ENCODE measurements at regions of chr1 and their contacts with region 1.

Region 1: GRCh38 chr1:117284399-117285215 is 73.9 kb upstream of the VTCN1 start:
- DNase-seq: peak; percentile 75

Region 2: GRCh38 chr1:117067533-117068370 is 216.9 kb before region 1 on chr1:
- CTCF ChIA-PET with region 1: interaction called, 21 read pairs
- POLR2A ChIA-PET with region 1: no interaction called
- DNase-seq: peak; percentile 66

Region 3: DNA sequence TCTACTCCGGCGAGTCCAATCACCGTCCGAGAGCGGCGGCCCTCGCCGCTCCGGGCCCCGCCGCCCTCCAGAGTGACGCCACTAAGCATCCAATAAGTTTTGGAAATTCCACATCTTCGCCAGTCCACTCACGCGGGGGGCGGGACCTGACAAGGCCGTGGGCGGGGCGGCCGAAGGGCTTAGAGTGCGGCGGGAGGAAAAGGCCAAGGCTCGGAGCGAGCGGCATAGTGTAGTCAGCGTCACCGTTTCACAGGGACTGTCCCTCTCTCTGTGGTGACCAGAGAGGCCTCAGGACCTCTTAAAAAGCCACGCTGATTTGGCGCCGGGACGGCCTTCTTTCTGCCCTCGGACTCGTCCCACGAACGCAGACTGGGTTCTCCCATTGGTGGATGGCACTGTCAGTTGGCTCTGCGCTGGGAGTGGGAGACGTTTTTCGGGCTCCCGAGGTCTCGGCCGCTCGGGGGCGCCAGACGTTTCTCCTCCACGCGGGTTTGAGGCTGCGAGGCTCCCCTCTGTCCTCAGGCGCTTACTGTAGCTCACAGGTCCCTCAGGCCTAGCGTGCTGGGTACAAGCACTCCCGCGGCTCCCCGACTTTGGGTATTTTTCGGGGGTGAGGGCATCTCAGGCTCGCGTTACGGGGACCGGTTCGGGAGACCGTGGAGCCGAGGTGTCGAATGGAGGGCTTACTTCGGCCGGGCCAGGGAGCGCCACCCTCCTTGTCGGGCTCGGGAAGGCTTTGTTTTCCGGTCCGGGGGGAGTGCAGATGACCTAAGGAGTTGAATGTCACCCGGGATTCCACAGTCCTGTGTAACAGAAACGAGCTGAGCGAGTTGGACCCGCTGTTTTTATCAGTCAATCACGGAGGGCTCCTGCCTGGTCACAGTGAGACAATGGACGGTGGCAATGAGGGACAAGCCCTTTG is 162.6 kb before region 1 on chr1:
- CTCF ChIA-PET with region 1: interaction called, 17 read pairs
- POLR2A ChIA-PET with region 1: interaction called, 3 read pairs
- DNase-seq: peak; percentile 96

Region 4: GRCh38 chr1:117128323-117129079 is 156.1 kb before region 1 on chr1:
- CTCF ChIA-PET with region 1: interaction called, 18 read pairs
- POLR2A ChIA-PET with region 1: no interaction called
- DNase-seq: peak; percentile 41

Region 5: DNA sequence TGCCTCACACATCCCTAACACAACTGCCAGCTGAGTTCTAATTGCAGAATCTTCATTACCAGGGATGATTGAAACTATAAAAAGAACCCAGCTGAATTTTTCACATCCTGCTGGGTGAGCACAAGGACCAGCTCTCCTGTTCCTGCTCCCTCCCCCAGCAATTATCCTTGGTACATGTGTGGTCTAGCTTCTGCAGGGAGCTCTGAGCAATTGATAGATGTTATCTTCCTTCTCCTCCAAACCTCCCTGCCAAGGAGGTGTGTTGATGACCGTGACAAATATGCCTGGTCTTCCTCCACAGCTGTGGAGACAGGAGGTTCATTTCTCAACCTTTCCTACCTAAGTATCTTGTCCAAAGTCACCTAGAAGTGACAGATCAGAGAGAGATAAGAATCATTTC is 17.3 kb after region 1 on chr1:
- CTCF ChIA-PET with region 1: no interaction called
- POLR2A ChIA-PET with region 1: no interaction called
- DNase-seq: no peak

Measured in HEK293T (cell line).